Activated CD4-positive, alpha-beta T cell treated with anti-CD3 and anti-CD28 coated beads, Interleukin-2, amount 10 ng/mL, durations not matched to agents 24 days and 14 days (primary cell): ENCODE measurements at regions of chr2 and their contacts with region 1.

Region 1: DNA sequence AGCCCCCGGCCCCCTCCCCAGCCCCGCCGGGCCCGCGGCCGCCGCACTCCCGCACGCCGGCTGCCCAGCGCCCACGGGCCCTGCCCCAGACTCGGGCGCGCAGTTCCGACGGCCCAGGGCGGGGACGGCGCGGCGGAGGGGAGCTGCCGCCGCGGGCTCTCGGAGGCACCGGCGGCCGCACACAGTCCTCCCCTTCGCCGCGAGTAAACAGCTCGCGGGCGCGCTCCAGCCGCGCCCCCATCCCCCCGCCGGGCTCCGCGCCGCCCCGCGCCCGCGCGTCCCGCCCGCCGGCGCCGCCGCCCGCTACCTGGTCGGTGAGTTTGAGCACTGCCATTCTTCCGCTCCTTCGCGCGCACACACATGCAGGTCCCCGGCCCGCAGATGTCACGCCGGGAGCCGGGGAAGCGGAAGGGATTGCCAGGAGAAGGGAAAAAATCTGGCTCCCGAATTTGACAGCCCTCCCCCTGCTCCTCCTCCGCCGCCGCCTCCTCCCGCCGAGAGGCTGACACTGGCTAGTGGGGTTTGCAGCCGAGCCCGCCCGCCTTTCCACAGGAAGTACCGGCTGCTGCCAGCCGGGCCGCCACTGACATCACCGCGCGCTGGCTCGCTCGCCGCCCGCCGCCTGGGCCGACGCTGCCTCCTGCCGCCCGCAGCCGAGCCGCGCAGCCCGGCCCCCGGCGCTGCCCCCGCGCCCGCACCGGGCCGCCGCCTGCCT is at the start of gene ANKRD44:
- DNase-seq: peak; percentile 96
- H3K4me3 Mint-ChIP-seq: peak within 1 kb of the TSS; percentile 91
- H3K27ac Mint-ChIP-seq: peak within 1 kb of the TSS; percentile 95
- H3K4me1 Mint-ChIP-seq: peaks cover 56% of the 10 kb centered on the region
- H3K27me3 Mint-ChIP-seq: no peaks in the 10 kb centered on the region
- total RNA-seq, gene ANKRD44: 130 and 147 TPM in 2 replicates

Region 2: DNA sequence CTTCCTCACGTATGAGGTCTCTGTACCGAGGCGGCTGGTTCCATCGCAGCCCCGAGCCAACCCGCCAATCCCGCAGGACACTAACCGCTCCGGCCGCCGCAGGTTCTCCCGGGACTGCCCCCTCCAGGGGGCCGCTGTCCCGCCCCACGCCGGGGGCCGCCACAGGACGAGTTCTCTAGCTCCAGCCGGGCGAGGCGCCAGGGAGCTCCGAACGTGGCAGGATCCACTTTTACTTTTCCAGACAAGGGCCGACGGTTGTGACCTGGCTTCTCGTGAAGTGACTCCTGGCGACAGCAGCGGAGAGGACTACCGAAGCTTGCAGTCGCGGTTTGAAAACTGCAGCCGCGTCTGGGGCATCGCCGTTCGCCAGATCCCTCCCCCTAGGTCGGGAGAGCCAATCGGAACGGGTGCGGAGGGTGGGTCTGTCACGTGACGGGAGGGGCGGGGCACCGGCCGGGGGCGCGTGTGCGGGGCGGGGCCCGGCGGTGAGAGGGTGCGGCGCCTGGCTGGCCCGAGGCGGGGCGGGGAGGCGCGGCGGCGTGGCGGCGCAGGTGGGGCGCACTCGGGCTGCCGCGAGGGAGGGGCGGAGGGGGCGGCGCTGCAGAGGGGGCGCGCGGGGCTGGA is 1139.1 kb before region 1 on chr2 and contains the start of gene STK17B:
- intact Hi-C with region 1: loop called (anchors 5 kb)
- DNase-seq: peak; percentile 98
- H3K4me3 Mint-ChIP-seq: peak within 1 kb of the TSS; percentile 93
- H3K27ac Mint-ChIP-seq: peak within 1 kb of the TSS; percentile 99
- H3K4me1 Mint-ChIP-seq: peaks cover 40% of the 10 kb centered on the region
- H3K27me3 Mint-ChIP-seq: no peaks in the 10 kb centered on the region
- total RNA-seq, gene STK17B: 129 and 131 TPM in 2 replicates

Region 3: GRCh38 chr2:197042739-197043196 is 267.7 kb before region 1 on chr2:
- intact Hi-C with region 1: no loop called
- DNase-seq: no peak
- H3K4me3 Mint-ChIP-seq: no peak overlapping the region
- H3K27ac Mint-ChIP-seq: peak overlapping the region; percentile 45
- H3K4me1 Mint-ChIP-seq: peaks cover 14% of the 10 kb centered on the region
- H3K27me3 Mint-ChIP-seq: no peaks in the 10 kb centered on the region

Region 4: GRCh38 chr2:197191177-197191939 is 119.1 kb before region 1 on chr2:
- intact Hi-C with region 1: loop called (anchors 1 kb)
- DNase-seq: peak; percentile 73
- H3K4me3 Mint-ChIP-seq: no peak overlapping the region
- H3K27ac Mint-ChIP-seq: peak overlapping the region; percentile 69
- H3K4me1 Mint-ChIP-seq: peaks cover 68% of the 10 kb centered on the region
- H3K27me3 Mint-ChIP-seq: no peaks in the 10 kb centered on the region

Region 5: GRCh38 chr2:197239434-197239833 is 71.0 kb before region 1 on chr2:
- intact Hi-C with region 1: loop called (anchors 1 kb)
- DNase-seq: peak; percentile 73
- H3K4me3 Mint-ChIP-seq: peak overlapping the region; percentile 86
- H3K27ac Mint-ChIP-seq: peak overlapping the region; percentile 94
- H3K4me1 Mint-ChIP-seq: peaks cover 71% of the 10 kb centered on the region
- H3K27me3 Mint-ChIP-seq: no peaks in the 10 kb centered on the region

Region 6: DNA sequence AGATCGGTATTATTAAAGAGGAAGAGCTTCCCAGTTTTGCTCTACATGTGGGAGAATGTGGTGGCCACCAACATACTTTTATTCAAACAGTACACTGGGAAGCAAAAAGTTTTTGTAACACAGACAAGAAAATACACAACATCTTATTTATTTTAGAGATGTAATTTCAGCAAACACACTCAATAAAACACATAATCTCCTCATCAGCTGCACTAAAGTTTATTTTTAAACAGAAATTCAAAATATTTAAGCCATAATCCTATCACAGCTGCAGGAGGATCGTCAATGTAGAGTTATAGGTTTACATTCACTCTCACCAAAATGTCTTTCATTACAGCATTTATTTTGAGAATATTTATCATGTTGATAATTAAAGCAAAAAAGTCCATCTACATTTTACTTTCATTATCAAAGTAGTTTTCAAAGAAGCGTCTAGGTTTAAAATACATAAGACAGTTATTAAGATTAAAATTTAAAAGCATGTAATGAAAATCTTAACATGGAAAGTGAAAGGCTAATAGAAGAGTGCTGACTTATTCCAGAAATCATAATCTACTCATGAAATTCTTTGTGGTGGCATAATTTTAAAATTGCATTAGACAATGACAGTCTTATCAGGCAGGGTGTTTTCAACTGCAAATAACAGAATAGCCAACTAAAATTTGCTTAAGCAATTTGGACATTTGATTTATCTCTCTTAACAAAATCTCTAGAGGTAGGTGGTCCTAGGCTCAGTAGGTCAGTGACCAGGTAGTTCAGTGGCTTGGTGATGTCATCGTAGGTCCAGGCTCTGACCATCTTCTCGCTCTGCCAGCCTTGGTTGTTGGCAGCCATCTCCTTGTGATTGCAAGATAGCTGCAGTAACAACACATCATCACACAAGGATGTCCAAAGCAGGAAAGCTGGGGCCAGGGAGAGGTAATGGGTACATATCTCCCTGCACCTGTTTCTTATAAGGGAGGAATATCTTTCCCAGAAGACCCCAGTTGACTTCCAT is 60.7 kb before region 1 on chr2:
- intact Hi-C with region 1: no loop called
- DNase-seq: no peak
- H3K4me3 Mint-ChIP-seq: peak overlapping the region; percentile 45
- H3K27ac Mint-ChIP-seq: peak overlapping the region; percentile 79
- H3K4me1 Mint-ChIP-seq: peaks cover 61% of the 10 kb centered on the region
- H3K27me3 Mint-ChIP-seq: no peaks in the 10 kb centered on the region

Region 7: GRCh38 chr2:197293252-197294007 is 17.0 kb before region 1 on chr2:
- intact Hi-C with region 1: loop called (anchors 1 kb)
- DNase-seq: peak; percentile 74
- H3K4me3 Mint-ChIP-seq: peak overlapping the region; percentile 82
- H3K27ac Mint-ChIP-seq: peak overlapping the region; percentile 96
- H3K4me1 Mint-ChIP-seq: peaks cover 75% of the 10 kb centered on the region
- H3K27me3 Mint-ChIP-seq: no peaks in the 10 kb centered on the region

Region 8: GRCh38 chr2:197378494-197379307 is 68.3 kb after region 1 on chr2:
- intact Hi-C with region 1: loop called (anchors 1 kb)
- DNase-seq: peak; percentile 89
- H3K4me3 Mint-ChIP-seq: no peak overlapping the region
- H3K27ac Mint-ChIP-seq: no peak overlapping the region
- H3K4me1 Mint-ChIP-seq: peaks cover 22% of the 10 kb centered on the region
- H3K27me3 Mint-ChIP-seq: peaks cover 12% of the 10 kb centered on the region

Region 9: DNA sequence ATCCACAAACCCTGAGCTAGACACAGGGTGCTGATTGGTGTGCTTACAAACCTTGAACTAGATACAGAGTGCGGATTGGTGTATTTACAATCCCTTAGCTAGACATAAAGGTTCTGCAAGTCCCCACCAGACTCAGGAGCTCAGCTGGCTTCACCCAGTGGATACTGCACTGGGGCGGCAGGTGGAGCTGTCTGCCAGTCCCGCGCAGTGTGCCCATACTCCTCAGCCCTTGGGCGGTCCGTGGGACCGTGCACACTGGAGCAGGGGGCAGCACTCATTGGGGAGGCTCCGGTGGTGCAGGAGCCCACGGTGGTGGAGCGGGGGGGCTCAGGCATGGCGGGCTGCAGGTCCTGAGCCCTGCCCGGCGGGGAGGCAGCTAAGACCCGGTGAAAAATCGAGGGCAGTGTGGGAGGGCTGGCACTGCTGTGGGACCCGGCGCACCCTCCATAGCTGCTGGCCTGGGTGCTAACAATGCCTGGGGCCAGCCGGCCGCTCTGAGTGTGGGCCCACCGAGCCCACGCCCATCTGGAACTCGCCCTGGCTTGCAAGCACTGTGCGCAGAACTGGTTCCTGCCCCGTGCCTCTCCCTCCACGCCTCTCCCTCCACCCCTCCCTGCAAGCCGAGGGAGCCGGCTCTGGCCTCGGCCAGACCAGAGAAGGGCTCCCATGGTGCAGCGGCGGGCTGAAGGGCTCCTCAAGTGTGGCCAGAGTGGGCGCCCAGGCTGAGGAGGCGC is 281.1 kb after region 1 on chr2:
- intact Hi-C with region 1: no loop called
- DNase-seq: no peak
- H3K4me3 Mint-ChIP-seq: no peak overlapping the region
- H3K27ac Mint-ChIP-seq: no peak overlapping the region
- H3K4me1 Mint-ChIP-seq: no peaks in the 10 kb centered on the region
- H3K27me3 Mint-ChIP-seq: peaks cover 11% of the 10 kb centered on the region